ENCODE measurements at regions of chr12 and their contacts with region 1.

Region 1: GRCh38 chr12:6195665-6196535 is 4.3 kb upstream of the CD9 start:
- DNase-seq: peak; percentile 81
- ATAC-seq: peak; percentile 70
- H3K4me3 ChIP-seq: no peak overlapping the region
- H3K4me3 Mint-ChIP-seq: no peak overlapping the region
- H3K27ac ChIP-seq: no peak overlapping the region
- H3K27ac Mint-ChIP-seq: no peak overlapping the region
- H3K4me1 ChIP-seq: peaks cover 16 to 27% of the 10 kb centered on the region in 2 donors
- H3K4me1 Mint-ChIP-seq: peaks cover 25% of the 10 kb centered on the region
- H3K27me3 ChIP-seq: peaks cover 0 to 19% (median 3%) of the 10 kb centered on the region in 4 experiments
- H3K27me3 Mint-ChIP-seq: peaks cover 31% of the 10 kb centered on the region
- CTCF ChIP-seq: peak; percentile 96

Region 2: DNA sequence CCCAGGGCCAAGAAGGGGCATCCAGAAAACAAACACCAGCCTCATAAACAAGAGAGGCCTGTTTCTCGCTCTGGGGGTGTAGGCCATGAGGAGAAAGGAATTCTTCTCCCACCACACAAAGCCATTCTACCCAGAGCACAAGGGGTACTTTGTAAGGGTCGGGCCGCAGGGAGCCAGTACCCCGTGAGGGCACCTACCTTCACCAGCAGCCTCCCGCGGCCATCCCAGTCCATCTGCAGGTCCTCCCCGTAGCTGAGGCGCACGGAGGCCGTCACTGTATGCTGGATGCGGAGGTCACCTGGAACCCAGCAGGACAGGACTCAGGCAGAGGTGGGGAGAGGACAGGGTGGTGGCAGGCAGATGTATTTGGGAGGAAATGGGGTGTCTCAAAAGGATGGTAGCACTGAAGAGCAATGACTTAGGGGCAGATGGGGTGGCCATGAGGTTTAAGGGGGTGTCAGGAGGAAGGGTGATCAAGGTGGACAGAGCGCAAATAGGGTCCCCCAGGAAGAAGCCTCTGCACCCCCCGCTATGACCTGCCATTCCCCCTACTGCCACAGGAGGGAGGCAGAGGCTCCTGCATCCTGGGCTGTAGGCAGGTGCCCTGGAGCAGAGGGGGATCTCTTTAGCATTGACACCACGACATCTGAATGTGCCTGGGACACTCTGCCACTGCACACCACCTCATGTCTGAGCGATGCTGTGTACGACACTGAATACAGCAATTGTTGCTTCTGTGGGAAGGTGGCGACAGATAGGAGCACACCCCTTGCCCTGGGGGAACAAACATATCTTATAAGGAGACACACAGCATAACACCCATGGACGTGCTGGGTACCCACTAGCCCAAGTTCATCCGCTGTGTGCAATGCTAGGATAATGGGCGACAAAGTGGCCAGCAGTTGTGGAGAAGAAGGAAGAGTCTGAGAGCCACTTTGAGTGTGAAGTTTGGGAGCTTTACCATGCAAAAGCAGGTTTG is 132.9 kb before region 1 on chr12:
- CTCF ChIA-PET with region 1: interaction called, 3 read pairs
- POLR2A ChIA-PET with region 1: no interaction called
- intact Hi-C with region 1: loop called (anchors 10 kb)
- DNase-seq: peak; percentile 69
- ATAC-seq: peak; percentile 78
- H3K4me3 ChIP-seq: no peak overlapping the region
- H3K4me3 Mint-ChIP-seq: no peak overlapping the region
- H3K27ac ChIP-seq: no peak overlapping the region
- H3K27ac Mint-ChIP-seq: no peak overlapping the region
- H3K4me1 ChIP-seq: no peaks in the 10 kb centered on the region
- H3K4me1 Mint-ChIP-seq: no peaks in the 10 kb centered on the region
- H3K27me3 ChIP-seq: peaks cover 0 to 10% (median 1%) of the 10 kb centered on the region in 4 experiments
- H3K27me3 Mint-ChIP-seq: peaks cover 30% of the 10 kb centered on the region
- CTCF ChIP-seq: peak; percentile 83

Region 3: GRCh38 chr12:6167327-6168259 is 28.3 kb before region 1 on chr12:
- CTCF ChIA-PET with region 1: no interaction called
- POLR2A ChIA-PET with region 1: no interaction called
- intact Hi-C with region 1: no loop called
- DNase-seq: peak; percentile 71
- ATAC-seq: peak; percentile 75
- H3K4me3 ChIP-seq: peak overlapping the region in 1 of 5 experiments; percentile 1
- H3K4me3 Mint-ChIP-seq: peak overlapping the region; percentile 57
- H3K27ac ChIP-seq: peak overlapping the region; percentile 48 to 57
- H3K27ac Mint-ChIP-seq: peak overlapping the region; percentile 78
- H3K4me1 ChIP-seq: peaks cover 15 to 17% of the 10 kb centered on the region in 2 donors
- H3K4me1 Mint-ChIP-seq: peaks cover 16% of the 10 kb centered on the region
- H3K27me3 ChIP-seq: no peaks in the 10 kb centered on the region
- H3K27me3 Mint-ChIP-seq: no peaks in the 10 kb centered on the region
- CTCF ChIP-seq: no peak

Region 4: DNA sequence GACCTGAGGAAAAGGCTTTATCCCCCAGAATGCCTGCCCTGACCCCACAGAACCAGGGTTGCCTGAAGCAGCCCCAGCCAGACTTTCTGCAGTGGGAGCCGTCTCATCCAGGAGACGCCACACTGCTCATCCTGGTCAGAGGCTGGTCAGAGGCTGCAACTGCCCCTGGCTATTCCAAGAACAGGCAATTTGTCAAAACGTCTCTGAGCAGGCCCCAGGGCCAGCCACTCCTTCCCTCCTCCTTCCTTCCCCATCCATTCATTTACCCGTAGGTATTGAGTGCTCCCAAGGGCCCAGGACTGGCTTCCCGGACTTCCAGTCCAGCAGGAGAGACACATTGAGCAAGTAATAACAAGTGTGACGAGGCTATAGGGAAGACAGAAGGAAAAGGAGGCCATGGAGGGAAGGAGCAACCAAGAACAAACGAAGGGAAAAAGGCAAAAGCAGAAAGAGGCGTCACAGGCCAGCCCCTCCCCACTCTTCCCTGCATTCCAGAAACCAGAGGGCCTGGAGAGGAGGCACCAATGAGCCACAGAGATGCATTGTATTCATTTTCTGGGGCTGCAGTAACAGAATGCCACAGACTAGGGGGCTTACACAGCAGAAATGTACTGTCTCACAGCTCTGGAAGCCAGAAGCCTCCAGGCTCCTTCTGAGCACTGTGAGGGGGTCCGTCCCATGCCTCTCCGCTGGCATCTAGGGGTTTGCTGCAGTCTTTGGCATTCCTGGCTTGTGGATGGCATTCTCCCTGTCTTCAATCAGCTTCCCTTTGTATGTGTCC is 16.7 kb before region 1 on chr12:
- CTCF ChIA-PET with region 1: no interaction called
- POLR2A ChIA-PET with region 1: no interaction called
- intact Hi-C with region 1: no loop called
- DNase-seq: no peak
- ATAC-seq: no peak
- H3K4me3 ChIP-seq: no peak overlapping the region
- H3K4me3 Mint-ChIP-seq: no peak overlapping the region
- H3K27ac ChIP-seq: no peak overlapping the region
- H3K27ac Mint-ChIP-seq: no peak overlapping the region
- H3K4me1 ChIP-seq: no peaks in the 10 kb centered on the region
- H3K4me1 Mint-ChIP-seq: no peaks in the 10 kb centered on the region
- H3K27me3 ChIP-seq: peaks cover 0 to 13% (median 0%) of the 10 kb centered on the region in 4 experiments
- H3K27me3 Mint-ChIP-seq: peaks cover 25% of the 10 kb centered on the region
- CTCF ChIP-seq: no peak

Region 5: GRCh38 chr12:6211421-6211869 is 15.5 kb after region 1 on chr12:
- CTCF ChIA-PET with region 1: interaction called, 18 read pairs
- POLR2A ChIA-PET with region 1: no interaction called
- intact Hi-C with region 1: no loop called
- DNase-seq: no peak
- ATAC-seq: no peak
- H3K4me3 ChIP-seq: no peak overlapping the region
- H3K4me3 Mint-ChIP-seq: peak overlapping the region; percentile 26
- H3K27ac ChIP-seq: no peak overlapping the region
- H3K27ac Mint-ChIP-seq: no peak overlapping the region
- H3K4me1 ChIP-seq: peaks cover 11 to 29% of the 10 kb centered on the region in 2 donors
- H3K4me1 Mint-ChIP-seq: peaks cover 21% of the 10 kb centered on the region
- H3K27me3 ChIP-seq: peaks cover 0 to 3% (median 0%) of the 10 kb centered on the region in 4 experiments
- H3K27me3 Mint-ChIP-seq: peaks cover 4% of the 10 kb centered on the region
- CTCF ChIP-seq: no peak

Region 6: DNA sequence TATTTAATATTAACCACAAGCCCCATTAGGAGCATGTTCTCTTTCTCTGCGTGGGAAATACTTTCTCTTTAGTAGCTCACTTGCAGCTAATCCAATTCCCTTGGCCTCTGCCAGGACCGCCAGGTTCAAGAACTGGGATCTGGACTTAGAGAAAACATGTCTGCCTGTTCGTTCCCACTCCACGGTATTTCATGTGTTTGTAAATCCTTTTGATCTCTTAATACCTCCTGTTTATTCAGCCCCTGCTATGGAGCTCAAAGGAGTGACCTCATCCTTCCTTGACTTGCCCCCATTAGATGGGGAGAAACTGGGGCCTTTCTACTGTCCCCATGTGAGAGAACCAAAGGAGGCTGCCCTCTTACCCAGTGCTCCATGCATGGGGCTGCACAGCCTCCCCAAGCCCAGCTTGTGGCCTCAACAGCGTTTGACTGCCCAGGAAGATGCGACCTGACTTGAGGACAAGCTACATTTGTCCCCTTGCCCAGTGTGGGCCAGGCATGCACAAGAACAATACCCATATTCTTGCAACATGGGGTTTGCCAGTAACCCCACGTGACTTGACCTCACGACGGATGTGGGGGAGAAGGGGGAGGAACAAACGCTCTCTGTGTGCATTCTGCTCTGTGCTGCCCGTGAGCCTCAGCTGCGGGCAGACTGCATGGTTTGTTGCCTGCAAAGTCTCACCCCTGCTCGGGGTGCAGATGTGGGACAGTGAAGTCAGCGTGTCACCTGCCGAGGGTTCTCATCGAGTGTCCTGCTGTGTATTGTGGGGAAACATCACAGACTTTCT is 34.6 kb after region 1 on chr12:
- CTCF ChIA-PET with region 1: interaction called, 4 read pairs
- POLR2A ChIA-PET with region 1: no interaction called
- intact Hi-C with region 1: loop called (anchors 5 kb)
- DNase-seq: peak; percentile 76
- ATAC-seq: peak; percentile 91
- H3K4me3 ChIP-seq: peak overlapping the region in 1 of 5 experiments; percentile 2
- H3K4me3 Mint-ChIP-seq: peak overlapping the region; percentile 72
- H3K27ac ChIP-seq: peak overlapping the region in 1 of 2 donors; percentile 2
- H3K27ac Mint-ChIP-seq: peak overlapping the region; percentile 73
- H3K4me1 ChIP-seq: peaks cover 23 to 29% of the 10 kb centered on the region in 2 donors
- H3K4me1 Mint-ChIP-seq: peaks cover 20% of the 10 kb centered on the region
- H3K27me3 ChIP-seq: no peaks in the 10 kb centered on the region
- H3K27me3 Mint-ChIP-seq: peaks cover 7% of the 10 kb centered on the region
- CTCF ChIP-seq: no peak

Region 7: DNA sequence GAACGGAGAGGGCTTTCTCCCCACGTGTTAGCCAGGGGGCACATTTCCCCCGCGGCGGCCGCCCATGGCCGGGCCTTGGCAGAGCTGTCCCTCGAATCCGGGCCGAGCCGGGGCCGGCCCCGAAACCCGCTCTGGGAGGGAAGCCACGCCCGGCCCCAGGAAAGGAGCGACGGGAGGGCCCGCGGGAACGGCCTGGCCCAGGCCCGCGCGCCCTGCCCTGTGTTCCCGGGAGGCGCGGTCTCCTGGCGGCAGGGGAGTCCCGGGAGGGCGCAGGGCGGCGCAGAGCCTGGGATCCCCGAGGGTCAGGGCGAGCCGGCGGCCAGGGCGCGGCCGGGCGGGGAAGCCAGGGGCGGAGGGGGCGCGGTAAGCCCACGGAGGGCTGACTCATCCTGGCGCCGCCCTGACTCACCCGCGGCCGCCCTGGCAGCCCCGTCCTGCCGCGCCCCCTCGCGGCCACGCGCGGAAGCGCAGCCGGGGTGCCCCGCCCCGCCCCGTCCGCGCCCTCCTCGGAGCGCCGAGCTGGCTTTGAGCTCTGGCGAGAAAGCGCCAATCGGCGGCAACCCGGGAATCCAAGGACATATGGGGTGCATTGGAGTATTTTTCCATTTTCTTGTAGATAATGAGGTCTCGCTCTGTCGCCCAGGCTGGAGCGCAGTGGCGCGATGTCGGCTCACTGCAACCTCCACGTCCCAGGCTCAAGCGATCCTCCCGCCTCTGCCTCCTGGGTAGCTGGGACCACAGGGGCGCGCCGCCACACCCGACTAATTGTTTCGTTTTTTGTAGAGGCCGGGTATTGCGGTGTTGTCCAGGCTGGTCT is 82.7 kb after region 1 on chr12:
- CTCF ChIA-PET with region 1: interaction called, 127 read pairs
- POLR2A ChIA-PET with region 1: no interaction called
- intact Hi-C with region 1: loop called (anchors 1 kb)
- DNase-seq: peak; percentile 86
- ATAC-seq: peak; percentile 99
- H3K4me3 ChIP-seq: peak overlapping the region in 4 of 5 experiments; percentile 8 to 58 (median 48)
- H3K4me3 Mint-ChIP-seq: peak overlapping the region; percentile 84
- H3K27ac ChIP-seq: no peak overlapping the region
- H3K27ac Mint-ChIP-seq: peak overlapping the region; percentile 10
- H3K4me1 ChIP-seq: peaks cover 10 to 11% of the 10 kb centered on the region in 2 donors
- H3K4me1 Mint-ChIP-seq: peaks cover 6% of the 10 kb centered on the region
- H3K27me3 ChIP-seq: peaks cover 0 to 34% (median 21%) of the 10 kb centered on the region in 4 experiments
- H3K27me3 Mint-ChIP-seq: peaks cover 69% of the 10 kb centered on the region
- CTCF ChIP-seq: peak; percentile 91

Region 8: GRCh38 chr12:6285063-6285477 is 89.2 kb after region 1 on chr12:
- CTCF ChIA-PET with region 1: interaction called, 127 read pairs
- POLR2A ChIA-PET with region 1: interaction called, 3 read pairs
- intact Hi-C with region 1: loop called (anchors 1 kb)
- DNase-seq: peak; percentile 78
- ATAC-seq: peak; percentile 85
- H3K4me3 ChIP-seq: no peak overlapping the region
- H3K4me3 Mint-ChIP-seq: no peak overlapping the region
- H3K27ac ChIP-seq: no peak overlapping the region
- H3K27ac Mint-ChIP-seq: no peak overlapping the region
- H3K4me1 ChIP-seq: peaks cover 0 to 5% of the 10 kb centered on the region in 2 donors
- H3K4me1 Mint-ChIP-seq: no peaks in the 10 kb centered on the region
- H3K27me3 ChIP-seq: peaks cover 0 to 11% (median 6%) of the 10 kb centered on the region in 4 experiments
- H3K27me3 Mint-ChIP-seq: peaks cover 51% of the 10 kb centered on the region
- CTCF ChIP-seq: peak; percentile 97